AG04450 (cell line): ENCODE measurements at regions of chr3 and their contacts with region 1.

Region 1: GRCh38 chr3:173553635-173554280 is 156.2 kb downstream of the NLGN1 start:
- DNase-seq: peak; percentile 4
- H3K4me3 ChIP-seq: no peak overlapping the region
- H3K27ac ChIP-seq: no peak overlapping the region
- H3K27me3 ChIP-seq: no peaks in the 10 kb centered on the region
- CTCF ChIP-seq: peak; percentile 85

Region 2: GRCh38 chr3:173371848-173372487 is 181.8 kb before region 1 on chr3:
- CTCF ChIA-PET with region 1: interaction called, 38 read pairs
- POLR2A ChIA-PET with region 1: no interaction called
- DNase-seq: no peak
- H3K4me3 ChIP-seq: no peak overlapping the region
- H3K27ac ChIP-seq: no peak overlapping the region
- H3K27me3 ChIP-seq: no peaks in the 10 kb centered on the region
- CTCF ChIP-seq: peak; percentile 75

Region 3: GRCh38 chr3:173538410-173538809 is 15.3 kb before region 1 on chr3:
- CTCF ChIA-PET with region 1: interaction called, 12 read pairs
- POLR2A ChIA-PET with region 1: no interaction called
- DNase-seq: no peak
- H3K4me3 ChIP-seq: no peak overlapping the region
- H3K27ac ChIP-seq: no peak overlapping the region
- H3K27me3 ChIP-seq: no peaks in the 10 kb centered on the region
- CTCF ChIP-seq: no peak

Region 4: GRCh38 chr3:173568623-173569022 is 14.9 kb after region 1 on chr3:
- CTCF ChIA-PET with region 1: interaction called, 11 read pairs
- POLR2A ChIA-PET with region 1: no interaction called
- DNase-seq: no peak
- H3K4me3 ChIP-seq: no peak overlapping the region
- H3K27ac ChIP-seq: no peak overlapping the region
- H3K27me3 ChIP-seq: no peaks in the 10 kb centered on the region
- CTCF ChIP-seq: no peak

Region 5: GRCh38 chr3:173977747-173978146 is 424.0 kb after region 1 on chr3:
- CTCF ChIA-PET with region 1: no interaction called
- POLR2A ChIA-PET with region 1: no interaction called
- DNase-seq: no peak
- H3K4me3 ChIP-seq: no peak overlapping the region
- H3K27ac ChIP-seq: no peak overlapping the region
- H3K27me3 ChIP-seq: no peaks in the 10 kb centered on the region
- CTCF ChIP-seq: no peak